AG04449 (cell line): ENCODE measurements at regions of chr18 and their contacts with region 1.

Region 1: DNA sequence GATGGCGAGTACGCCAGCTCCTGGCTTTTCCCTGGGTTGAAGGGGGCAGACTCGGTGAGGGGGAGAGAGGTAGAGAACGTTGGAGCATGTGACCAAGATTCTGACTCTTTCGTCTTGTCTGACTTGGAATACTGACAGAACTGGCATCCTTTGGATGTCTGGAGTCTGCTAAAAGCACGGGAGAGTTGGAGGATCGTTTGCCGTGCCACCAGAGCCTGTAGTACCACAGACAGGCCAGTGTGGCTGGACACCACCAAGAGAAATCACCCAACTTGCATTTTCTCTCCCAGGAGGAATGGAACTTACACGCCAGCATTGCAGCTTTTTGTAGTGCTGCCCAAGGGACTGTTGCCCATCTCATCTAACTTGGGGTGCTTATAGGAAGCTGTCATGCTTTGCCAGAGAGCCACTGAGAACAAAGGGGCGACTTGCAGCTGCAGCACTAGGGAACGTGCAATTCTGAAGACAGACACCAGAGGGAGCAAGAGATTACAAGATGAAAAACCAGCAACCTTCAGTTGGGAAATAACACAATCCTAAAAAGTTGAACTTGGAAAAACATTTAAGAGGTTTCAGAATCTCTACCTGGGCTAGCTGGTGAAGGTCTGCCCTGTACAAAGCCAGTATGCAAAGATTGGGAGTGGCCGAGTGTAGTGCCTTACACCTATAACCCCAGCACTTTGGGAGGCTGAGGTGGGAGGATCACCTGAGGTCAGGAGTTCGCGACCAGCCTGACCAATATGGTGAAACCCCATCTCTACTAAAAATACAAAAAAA is 24.1 kb downstream of the PSMG2 start:
- DNase-seq: no peak
- H3K4me3 ChIP-seq: no peak overlapping the region
- CTCF ChIP-seq: peak; percentile 74

Region 2: DNA sequence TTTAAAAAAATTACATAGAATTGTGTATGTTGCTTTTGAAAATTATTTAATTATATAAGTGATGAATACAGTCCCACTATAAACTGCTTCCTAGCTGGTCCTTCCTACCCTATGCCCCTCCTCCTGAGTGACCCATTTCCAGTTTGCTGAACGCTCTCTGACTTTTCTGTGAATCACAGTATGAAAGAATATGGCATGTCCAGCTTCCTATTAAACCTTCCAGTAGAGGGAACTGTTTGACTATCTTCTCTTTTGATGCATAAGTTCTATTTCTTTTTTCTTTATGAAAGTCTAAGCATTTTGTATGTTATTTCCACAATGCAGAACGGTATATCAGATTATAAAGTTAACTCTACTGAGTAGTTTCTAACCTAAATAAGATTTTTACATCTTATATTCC is 17.1 kb after region 1 on chr18:
- CTCF ChIA-PET with region 1: interaction called, 112 read pairs
- POLR2A ChIA-PET with region 1: no interaction called
- DNase-seq: no peak
- H3K4me3 ChIP-seq: no peak overlapping the region
- CTCF ChIP-seq: peak; percentile 46

Region 3: GRCh38 chr18:12750076-12750714 is 23.2 kb after region 1 on chr18:
- CTCF ChIA-PET with region 1: interaction called, 112 read pairs
- POLR2A ChIA-PET with region 1: no interaction called
- DNase-seq: no peak
- H3K4me3 ChIP-seq: no peak overlapping the region
- CTCF ChIP-seq: no peak

Region 4: DNA sequence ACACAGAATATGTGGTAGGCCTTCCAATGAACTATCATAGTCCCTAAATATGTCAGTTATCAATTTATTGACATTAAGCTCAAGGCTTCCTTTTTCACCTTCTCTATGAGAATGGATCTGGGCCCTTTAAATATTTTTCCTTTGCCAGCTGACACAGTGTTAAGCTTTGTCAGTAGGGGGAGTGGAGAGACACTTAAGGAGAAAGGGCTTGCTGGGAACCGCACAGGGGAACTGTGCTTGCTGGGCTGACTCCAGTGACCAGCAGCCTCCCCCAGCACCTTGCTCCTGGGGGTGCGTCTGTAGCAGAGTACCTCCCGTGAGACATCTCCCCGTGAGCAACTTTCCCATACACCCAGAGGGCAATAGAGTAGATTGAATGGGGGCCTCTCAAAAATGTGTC is 163.5 kb after region 1 on chr18:
- CTCF ChIA-PET with region 1: interaction called, 93 read pairs
- POLR2A ChIA-PET with region 1: no interaction called
- DNase-seq: no peak
- H3K4me3 ChIP-seq: no peak overlapping the region
- CTCF ChIP-seq: no peak

Region 5: DNA sequence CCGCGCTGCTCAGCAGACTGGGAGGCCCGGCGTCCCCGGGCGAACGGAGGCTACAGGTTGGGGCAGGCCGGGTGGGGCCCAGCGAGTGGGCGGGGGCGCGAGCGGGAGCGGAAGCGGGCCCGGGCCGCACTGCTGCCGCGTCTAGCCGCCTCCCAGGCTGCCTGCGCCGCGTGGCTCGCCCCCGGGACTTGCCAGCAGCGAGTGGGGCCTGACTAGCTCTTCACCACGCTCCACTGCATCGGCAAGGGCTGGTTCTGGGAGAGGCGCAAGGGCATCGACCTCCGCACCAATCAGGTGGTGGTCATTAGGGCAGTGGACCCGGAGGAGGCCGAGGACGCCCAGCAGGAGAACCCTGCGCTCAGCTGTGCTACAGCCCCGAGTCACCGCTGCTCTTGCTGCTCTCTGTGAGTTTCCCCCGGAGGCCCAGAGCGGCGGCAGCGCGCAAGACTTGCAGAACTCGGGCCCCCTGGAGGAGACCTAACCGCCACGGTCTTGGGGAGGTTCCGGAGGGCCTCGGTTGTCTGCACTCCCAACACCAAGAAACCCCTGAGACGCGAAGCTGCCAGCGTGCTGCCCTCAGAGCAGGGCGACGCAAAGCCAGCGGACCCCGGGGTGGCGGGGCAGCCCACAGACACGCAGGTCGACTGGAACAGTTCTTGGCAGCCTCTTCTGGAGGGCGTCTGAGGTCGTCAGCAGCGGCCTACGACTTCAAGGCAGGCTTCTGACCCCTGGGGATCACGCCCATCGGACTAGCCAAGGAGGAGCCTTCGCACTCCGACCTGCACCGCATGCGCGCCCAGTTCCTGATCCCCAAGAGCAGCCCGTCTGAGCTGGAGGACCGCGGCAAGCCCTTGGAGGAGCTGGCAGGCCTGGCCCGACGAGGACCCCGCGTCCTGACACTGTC is 184.3 kb after region 1 on chr18:
- CTCF ChIA-PET with region 1: interaction called, 13 read pairs
- POLR2A ChIA-PET with region 1: interaction called, 3 read pairs
- DNase-seq: no peak
- H3K4me3 ChIP-seq: peak overlapping the region; percentile 32
- CTCF ChIP-seq: no peak

Region 6: GRCh38 chr18:12921178-12921577 is 194.2 kb after region 1 on chr18:
- CTCF ChIA-PET with region 1: interaction called, 13 read pairs
- POLR2A ChIA-PET with region 1: no interaction called
- DNase-seq: no peak
- H3K4me3 ChIP-seq: no peak overlapping the region
- CTCF ChIP-seq: no peak

Region 7: DNA sequence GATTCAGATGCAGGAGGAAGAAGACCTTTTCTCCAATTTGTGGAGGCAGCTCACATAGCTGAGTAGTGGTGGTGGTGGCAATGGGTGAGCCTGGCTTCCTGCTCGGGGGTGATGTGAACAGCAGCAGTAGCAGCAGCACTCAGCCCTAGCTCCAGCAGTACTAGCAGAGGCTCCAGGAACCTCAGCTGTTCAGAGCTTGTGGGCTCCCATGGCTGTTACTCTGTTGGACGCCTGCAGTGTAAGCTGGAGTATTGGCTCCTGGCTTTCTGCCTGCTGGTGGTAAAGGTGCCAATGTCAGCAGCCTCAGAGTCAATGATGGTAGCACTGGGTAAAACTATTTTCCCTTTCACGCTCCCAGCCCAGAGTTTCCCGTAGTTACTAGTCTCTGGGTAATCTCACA is 217.7 kb after region 1 on chr18:
- CTCF ChIA-PET with region 1: interaction called, 22 read pairs
- POLR2A ChIA-PET with region 1: no interaction called
- DNase-seq: no peak
- H3K4me3 ChIP-seq: no peak overlapping the region
- CTCF ChIP-seq: no peak